ENCODE measurements at regions of chr7 and their contacts with region 1.

Region 1: DNA sequence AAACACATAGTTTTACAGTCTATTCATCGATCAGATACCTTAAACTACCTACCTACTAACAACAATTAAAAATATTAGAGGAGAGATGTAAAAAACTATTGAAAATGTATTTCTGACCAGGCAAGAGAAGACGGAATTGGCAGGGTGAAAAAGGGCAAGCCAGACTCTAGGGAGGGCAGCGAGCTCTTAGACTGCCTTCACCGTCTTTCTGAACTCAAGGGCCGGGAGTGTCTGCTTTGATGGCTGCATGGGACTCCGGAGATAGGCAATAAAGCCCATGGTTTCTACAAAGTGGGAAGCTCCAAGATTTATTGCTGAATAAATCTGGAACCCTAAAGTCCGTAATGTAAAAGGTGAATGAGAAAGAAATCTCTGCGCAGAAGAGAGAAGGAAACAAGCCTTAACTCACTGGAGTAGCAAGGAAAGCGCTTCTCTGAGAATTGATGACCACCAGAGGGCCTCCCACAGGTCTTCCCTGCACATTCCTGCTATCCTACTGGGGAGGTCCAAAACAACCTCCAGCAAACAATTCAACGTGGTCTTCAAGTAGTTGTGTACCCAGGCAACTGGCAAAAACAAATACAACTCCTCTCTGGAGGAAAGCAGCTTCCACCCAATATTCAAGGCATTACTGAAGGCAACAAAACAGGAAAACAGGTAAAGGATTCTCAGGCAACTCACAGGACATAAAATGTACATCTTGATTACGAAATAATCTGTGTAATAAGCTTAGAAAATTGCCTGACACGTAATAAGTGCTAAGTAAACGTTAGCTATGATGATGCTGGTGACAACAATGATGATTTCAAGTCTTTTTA is 181.3 kb downstream of the SDK1 start:
- DNase-seq: peak; percentile 53
- H3K4me3 ChIP-seq: no peak overlapping the region
- H3K27ac ChIP-seq: no peak overlapping the region
- H3K4me1 ChIP-seq: no peaks in the 10 kb centered on the region
- H3K27me3 ChIP-seq: no peaks in the 10 kb centered on the region
- CTCF ChIP-seq: peak; percentile 53 to 56
- POLR2A ChIP-seq: no peak

Region 2: GRCh38 chr7:3427957-3428356 is 54.4 kb before region 1 on chr7:
- CTCF ChIA-PET with region 1: no interaction called
- POLR2A ChIA-PET with region 1: no interaction called
- dilution Hi-C with region 1: no loop called
- intact Hi-C with region 1: no loop called
- DNase-seq: no peak
- H3K4me3 ChIP-seq: no peak overlapping the region
- H3K27ac ChIP-seq: no peak overlapping the region
- H3K4me1 ChIP-seq: no peaks in the 10 kb centered on the region
- H3K27me3 ChIP-seq: no peaks in the 10 kb centered on the region
- CTCF ChIP-seq: no peak
- POLR2A ChIP-seq: no peak

Region 3: GRCh38 chr7:3446786-3447185 is 35.6 kb before region 1 on chr7:
- CTCF ChIA-PET with region 1: no interaction called
- POLR2A ChIA-PET with region 1: no interaction called
- dilution Hi-C with region 1: no loop called
- intact Hi-C with region 1: no loop called
- DNase-seq: no peak
- H3K4me3 ChIP-seq: no peak overlapping the region
- H3K27ac ChIP-seq: no peak overlapping the region
- H3K4me1 ChIP-seq: no peaks in the 10 kb centered on the region
- H3K27me3 ChIP-seq: no peaks in the 10 kb centered on the region
- CTCF ChIP-seq: no peak
- POLR2A ChIP-seq: no peak

Region 4: DNA sequence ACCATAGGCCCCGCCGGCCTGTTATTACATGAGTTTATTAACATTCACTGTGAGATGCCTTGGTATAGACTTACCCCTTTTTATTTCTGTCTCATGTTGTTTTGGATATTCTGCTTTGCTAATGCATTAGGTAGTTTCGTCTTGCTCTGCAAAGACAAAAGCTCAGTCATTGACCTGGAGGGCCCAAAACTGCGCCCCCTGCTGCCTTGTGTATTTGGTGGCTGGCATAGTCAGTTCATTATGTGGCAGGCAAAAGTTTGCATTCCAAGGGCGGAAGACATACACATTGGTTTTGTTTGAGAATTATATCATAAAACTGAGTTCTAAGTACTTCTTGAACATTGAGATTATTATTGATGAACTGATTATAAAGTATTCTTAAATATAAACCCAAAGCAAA is 191.2 kb after region 1 on chr7:
- CTCF ChIA-PET with region 1: interaction called, 43 read pairs
- POLR2A ChIA-PET with region 1: no interaction called
- dilution Hi-C with region 1: no loop called
- intact Hi-C with region 1: loop called (anchors 2 kb)
- DNase-seq: peak; percentile 25
- H3K4me3 ChIP-seq: no peak overlapping the region
- H3K27ac ChIP-seq: no peak overlapping the region
- H3K4me1 ChIP-seq: no peaks in the 10 kb centered on the region
- H3K27me3 ChIP-seq: no peaks in the 10 kb centered on the region
- CTCF ChIP-seq: peak; percentile 37 to 54
- POLR2A ChIP-seq: no peak

Region 5: DNA sequence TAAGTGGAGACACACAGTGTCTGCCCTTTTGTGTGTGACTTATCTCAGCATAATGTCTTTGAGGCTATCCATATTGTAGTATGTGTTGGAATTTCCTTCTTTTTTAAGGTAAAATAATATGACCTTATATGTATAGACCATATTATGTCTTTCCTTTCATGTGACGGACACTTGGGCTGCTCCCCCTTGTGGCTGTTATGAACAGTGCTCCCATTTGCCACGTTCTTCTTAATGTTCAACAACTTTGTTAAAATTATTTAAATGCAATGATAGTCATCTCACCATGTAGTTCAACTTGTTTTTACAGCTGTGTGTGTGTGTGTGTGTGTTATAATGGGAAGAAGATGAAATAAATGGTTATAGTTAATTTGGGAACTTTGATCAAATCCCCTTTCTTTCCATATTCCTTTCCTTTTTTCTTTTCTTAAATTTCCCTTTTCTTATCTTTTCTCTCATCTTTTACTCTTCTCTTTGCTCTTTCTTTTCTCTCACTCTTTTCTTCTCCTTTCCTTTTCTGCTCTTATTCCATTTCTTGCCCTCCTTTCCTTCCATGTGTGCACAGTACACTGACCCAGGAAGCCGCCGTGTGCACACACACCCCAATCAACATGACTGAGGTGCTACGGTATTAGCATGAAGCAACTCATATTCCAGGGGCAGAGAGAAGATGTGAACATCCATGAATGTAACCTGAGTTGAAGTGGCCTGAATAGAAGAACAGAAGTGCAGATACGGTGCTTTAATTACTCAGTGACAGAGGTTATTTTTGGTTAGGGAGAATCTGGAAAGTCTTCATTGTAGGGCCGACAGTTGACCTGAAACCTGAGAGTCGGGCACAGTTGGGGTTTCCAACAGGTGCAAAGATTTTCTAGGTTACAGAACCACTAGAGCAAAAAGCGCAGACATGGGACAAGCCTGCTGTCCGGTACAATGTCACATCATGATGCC is 415.4 kb after region 1 on chr7:
- CTCF ChIA-PET with region 1: interaction called, 3 read pairs
- POLR2A ChIA-PET with region 1: no interaction called
- dilution Hi-C with region 1: no loop called
- intact Hi-C with region 1: loop called (anchors 2 kb)
- DNase-seq: peak; percentile 55
- H3K4me3 ChIP-seq: no peak overlapping the region
- H3K27ac ChIP-seq: no peak overlapping the region
- H3K4me1 ChIP-seq: no peaks in the 10 kb centered on the region
- H3K27me3 ChIP-seq: no peaks in the 10 kb centered on the region
- CTCF ChIP-seq: peak; percentile 49 to 69
- POLR2A ChIP-seq: no peak

Region 6: DNA sequence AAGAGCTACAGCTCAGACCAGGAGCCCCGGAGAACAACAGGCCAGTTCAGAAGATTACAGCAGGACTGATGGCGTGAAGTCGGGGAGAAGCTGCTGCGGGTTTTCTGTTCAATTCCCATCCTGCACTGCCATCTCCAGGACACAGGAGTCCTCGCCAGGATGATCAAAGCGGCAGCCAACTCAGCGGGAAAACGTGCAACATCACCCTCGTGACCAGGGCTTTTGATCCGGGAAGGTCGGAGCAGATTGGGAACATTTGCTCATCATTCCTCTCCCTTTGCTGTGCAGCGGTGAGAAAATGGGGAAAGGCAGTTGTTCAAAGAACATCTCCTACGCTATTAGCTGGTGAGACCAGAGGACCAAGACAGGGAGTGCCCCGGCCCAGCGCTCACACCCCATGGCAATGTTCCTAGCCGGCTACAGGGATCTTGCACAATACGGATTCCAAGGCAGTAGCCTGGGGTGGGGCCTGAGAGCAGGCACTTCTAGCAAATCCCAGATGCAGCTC is 1149.4 kb after region 1 on chr7:
- CTCF ChIA-PET with region 1: interaction called, 3 read pairs
- POLR2A ChIA-PET with region 1: no interaction called
- dilution Hi-C with region 1: no loop called
- intact Hi-C with region 1: loop called (anchors 2 kb)
- DNase-seq: peak; percentile 76
- H3K4me3 ChIP-seq: no peak overlapping the region
- H3K27ac ChIP-seq: no peak overlapping the region
- H3K4me1 ChIP-seq: peaks cover 3% of the 10 kb centered on the region
- H3K27me3 ChIP-seq: no peaks in the 10 kb centered on the region
- CTCF ChIP-seq: peak; percentile 65 to 66
- POLR2A ChIP-seq: no peak

Measured in endothelial cell of umbilical vein (primary cell).